ENCODE measurements at regions of chr11 and their contacts with region 1.

Region 1: GRCh38 chr11:112961146-112961668 is at the start of gene NCAM1:
- DNase-seq: peak; percentile 90 to 96 (median 94)
- H3K4me3 ChIP-seq: peak within 1 kb of the TSS; percentile 61 to 93 (median 85)
- H3K27ac ChIP-seq: peak within 1 kb of the TSS; percentile 74 to 98 (median 96)
- H3K27me3 ChIP-seq: no peaks in the 10 kb centered on the region
- CTCF ChIP-seq: peak in 18 of 56 donors; percentile 2 to 32 (median 19)
- total RNA-seq, gene NCAM1: 340 to 857 (median 568) TPM

Region 2: GRCh38 chr11:112057170-112057569 is 904.0 kb before region 1 on chr11:
- intact Hi-C with region 1: no loop called
- DNase-seq: no peak
- H3K4me3 ChIP-seq: no peak overlapping the region
- H3K27ac ChIP-seq: no peak overlapping the region
- H3K27me3 ChIP-seq: no peaks in the 10 kb centered on the region
- CTCF ChIP-seq: no peak

Region 3: DNA sequence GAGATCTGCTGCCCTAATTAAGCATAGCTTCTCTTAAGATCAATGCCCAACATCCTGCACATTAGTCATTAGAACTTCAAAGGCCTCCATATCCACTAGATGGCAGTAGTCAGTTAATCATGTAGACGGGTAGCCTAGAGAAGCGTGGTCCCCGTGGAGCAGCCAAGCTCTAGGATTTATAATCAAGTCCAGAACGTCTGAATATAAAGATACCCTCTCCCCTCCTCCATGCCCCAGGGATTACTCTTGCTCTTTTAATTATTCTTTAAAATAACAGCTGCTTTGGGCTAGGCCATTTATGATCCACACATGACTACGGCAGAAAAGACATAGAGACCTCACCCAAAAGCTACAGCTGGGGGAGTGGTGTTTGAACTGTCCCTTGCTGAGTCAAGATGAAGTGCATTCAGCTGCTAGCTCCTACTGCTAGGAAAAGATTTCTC is 372.9 kb before region 1 on chr11:
- intact Hi-C with region 1: loop called in 1 of 2 experiments (anchors 5 kb)
- DNase-seq: peak in 9 of 10 donors; percentile 40 to 88 (median 78)
- H3K4me3 ChIP-seq: peak overlapping the region in 3 of 59 donors; percentile 17 to 31 (median 19)
- H3K27ac ChIP-seq: peak overlapping the region in 38 of 59 donors; percentile 3 to 73 (median 52)
- H3K27me3 ChIP-seq: no peaks in the 10 kb centered on the region
- CTCF ChIP-seq: peak; percentile 55 to 93 (median 83)

Region 4: DNA sequence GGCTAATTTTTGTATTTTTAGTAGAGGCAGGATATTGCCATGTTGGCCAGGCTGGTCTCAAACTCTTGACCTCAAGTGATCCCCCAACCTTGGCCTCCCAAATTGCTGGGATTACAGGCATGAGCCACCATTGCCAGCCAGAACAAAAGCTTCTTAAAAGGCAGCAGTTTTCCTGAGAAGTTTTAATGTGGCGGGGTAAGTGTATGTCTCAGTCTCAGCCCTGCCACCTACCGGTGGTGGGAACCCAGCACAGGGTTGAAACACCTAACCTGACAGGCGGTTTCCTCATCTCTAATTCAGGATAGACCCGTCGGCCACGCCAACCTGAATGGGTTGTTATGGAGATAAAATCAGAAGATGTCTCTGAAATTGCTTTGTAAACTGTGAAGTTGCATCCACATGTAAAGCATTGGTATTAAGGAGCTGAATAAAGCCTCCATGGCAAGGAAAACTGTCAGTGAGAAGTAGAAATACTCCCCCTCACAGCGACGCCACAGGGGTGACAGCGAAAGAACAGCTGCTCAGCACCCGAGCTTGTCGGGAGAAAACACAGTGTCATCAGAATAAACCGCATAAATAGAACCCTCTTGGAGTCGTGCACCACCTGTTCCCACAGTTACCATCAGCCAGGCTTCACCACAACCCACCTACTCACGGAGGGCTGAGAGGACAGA is 165.9 kb before region 1 on chr11:
- intact Hi-C with region 1: loop called (anchors 2 to 5 kb)
- DNase-seq: peak in 5 of 10 donors; percentile 59 to 70 (median 67)
- H3K4me3 ChIP-seq: peak overlapping the region in 1 of 59 donors; percentile 6
- H3K27ac ChIP-seq: peak overlapping the region in 26 of 59 donors; percentile 3 to 83 (median 72)
- H3K27me3 ChIP-seq: no peaks in the 10 kb centered on the region
- CTCF ChIP-seq: peak; percentile 21 to 78 (median 54)

Region 5: GRCh38 chr11:112881461-112881860 is 79.7 kb before region 1 on chr11:
- intact Hi-C with region 1: loop called (anchors 1 to 5 kb)
- DNase-seq: peak; percentile 90 to 97 (median 94)
- H3K4me3 ChIP-seq: peak overlapping the region in 58 of 59 donors; percentile 20 to 69 (median 56)
- H3K27ac ChIP-seq: peak overlapping the region; percentile 26 to 95 (median 87)
- H3K27me3 ChIP-seq: no peaks in the 10 kb centered on the region
- CTCF ChIP-seq: peak in 6 of 56 donors; percentile 6 to 27 (median 14)

Region 6: GRCh38 chr11:112911124-112911523 is 50.1 kb before region 1 on chr11:
- intact Hi-C with region 1: loop called in 1 of 2 experiments (anchors 5 kb)
- DNase-seq: no peak
- H3K4me3 ChIP-seq: no peak overlapping the region
- H3K27ac ChIP-seq: no peak overlapping the region
- H3K27me3 ChIP-seq: peaks cover 0 to 4% (median 0%) of the 10 kb centered on the region in 45 donors
- CTCF ChIP-seq: no peak

Region 7: GRCh38 chr11:113162592-113162962 is 201.4 kb after region 1 on chr11:
- intact Hi-C with region 1: loop called in 1 of 2 experiments (anchors 5 kb)
- DNase-seq: peak in 9 of 10 donors; percentile 35 to 81 (median 69)
- H3K4me3 ChIP-seq: peak overlapping the region in 1 of 59 donors; percentile 16
- H3K27ac ChIP-seq: peak overlapping the region in 58 of 59 donors; percentile 18 to 89 (median 78)
- H3K27me3 ChIP-seq: no peaks in the 10 kb centered on the region
- CTCF ChIP-seq: peak; percentile 27 to 81 (median 56)

Region 8: GRCh38 chr11:113274713-113275582 is 313.7 kb after region 1 on chr11:
- intact Hi-C with region 1: no loop called
- DNase-seq: peak in 2 of 10 donors; percentile 42 to 60
- H3K4me3 ChIP-seq: no peak overlapping the region
- H3K27ac ChIP-seq: peak overlapping the region in 52 of 59 donors; percentile 5 to 83 (median 66)
- H3K27me3 ChIP-seq: no peaks in the 10 kb centered on the region
- CTCF ChIP-seq: peak in 44 of 56 donors; percentile 15 to 63 (median 38)

Measured in dorsolateral prefrontal cortex (tissue), 120 donors.